ENCODE measurements at regions of chr2 and their contacts with region 1.

Region 1: DNA sequence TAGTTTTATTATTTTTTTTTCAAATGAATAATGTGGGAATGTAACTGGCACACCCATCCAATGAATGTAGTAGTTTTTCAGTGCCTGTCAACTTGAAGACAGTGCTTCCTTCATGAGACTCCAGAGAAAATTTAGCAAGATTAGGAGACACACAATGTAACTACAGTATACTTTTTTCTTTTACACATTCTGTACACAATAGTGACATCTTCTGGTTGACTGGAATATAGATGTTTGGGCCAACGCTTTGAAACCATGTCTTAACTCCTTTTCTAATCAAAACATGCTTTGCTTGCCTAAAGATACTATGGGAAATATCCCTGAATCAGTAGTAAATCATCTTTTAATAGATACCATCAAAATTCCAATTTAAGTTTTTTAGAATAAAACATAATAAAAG is 229.5 kb upstream of the ZC3H15 start:
- DNase-seq: peak; percentile 2
- H3K4me3 Mint-ChIP-seq: no peak overlapping the region
- H3K27ac Mint-ChIP-seq: no peak overlapping the region
- H3K4me1 Mint-ChIP-seq: no peaks in the 10 kb centered on the region
- H3K27me3 Mint-ChIP-seq: no peaks in the 10 kb centered on the region
- CTCF ChIP-seq: peak; percentile 51

Region 2: DNA sequence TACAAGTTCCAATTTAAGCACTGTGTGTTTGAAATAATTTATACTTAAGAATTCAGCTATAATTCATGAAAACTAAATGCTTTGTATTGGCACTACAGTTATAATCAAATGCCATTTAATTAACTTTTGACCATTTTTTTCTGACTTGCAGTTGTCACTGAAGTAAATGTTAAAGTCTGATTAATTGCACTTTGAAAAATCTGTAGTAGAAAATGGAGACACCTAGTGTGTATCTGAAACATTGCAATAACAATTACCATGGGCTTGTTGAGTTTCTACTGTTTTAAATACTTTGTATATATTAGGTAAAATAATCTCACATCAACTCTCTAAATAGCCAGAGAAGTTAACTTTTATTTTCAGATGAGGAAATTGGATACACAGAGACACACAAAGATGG is 976.5 kb before region 1 on chr2:
- CTCF ChIA-PET with region 1: no interaction called
- intact Hi-C with region 1: loop called (anchors 10 kb)
- DNase-seq: no peak
- H3K4me3 Mint-ChIP-seq: no peak overlapping the region
- H3K27ac Mint-ChIP-seq: no peak overlapping the region
- H3K4me1 Mint-ChIP-seq: peaks cover 26% of the 10 kb centered on the region
- H3K27me3 Mint-ChIP-seq: no peaks in the 10 kb centered on the region
- CTCF ChIP-seq: peak; percentile 45

Region 3: DNA sequence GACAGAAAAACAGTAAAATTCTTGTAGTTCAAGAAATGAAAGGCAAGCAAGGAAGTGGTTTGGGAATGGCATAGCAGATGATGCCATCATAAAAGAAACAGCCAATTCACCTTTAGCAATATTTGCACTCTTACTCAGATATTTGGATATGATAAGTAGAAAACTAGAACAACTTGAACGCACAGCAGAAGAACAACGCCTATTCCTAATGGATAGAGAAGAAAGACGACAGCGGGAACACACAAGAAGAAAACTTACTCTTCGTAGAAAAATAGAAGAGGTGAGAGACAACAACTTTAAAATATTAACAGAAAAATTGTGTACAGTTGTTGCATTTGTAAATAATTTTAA is 510.0 kb before region 1 on chr2:
- CTCF ChIA-PET with region 1: no interaction called
- intact Hi-C with region 1: loop called (anchors 2 kb)
- DNase-seq: no peak
- H3K4me3 Mint-ChIP-seq: peak overlapping the region; percentile 30
- H3K27ac Mint-ChIP-seq: peak overlapping the region; percentile 12
- H3K4me1 Mint-ChIP-seq: peaks cover 23% of the 10 kb centered on the region
- H3K27me3 Mint-ChIP-seq: no peaks in the 10 kb centered on the region
- CTCF ChIP-seq: no peak

Region 4: GRCh38 chr2:186129767-186130581 is 126.6 kb before region 1 on chr2:
- CTCF ChIA-PET with region 1: interaction called, 3 read pairs
- intact Hi-C with region 1: loop called (anchors 10 kb)
- DNase-seq: peak; percentile 46
- H3K4me3 Mint-ChIP-seq: peak overlapping the region; percentile 26
- H3K27ac Mint-ChIP-seq: peak overlapping the region; percentile 93
- H3K4me1 Mint-ChIP-seq: peaks cover 51% of the 10 kb centered on the region
- H3K27me3 Mint-ChIP-seq: no peaks in the 10 kb centered on the region
- CTCF ChIP-seq: no peak